Vagina (tissue), 2 donors: ENCODE measurements at regions of chr3 and their contacts with region 1.

Region 1: DNA sequence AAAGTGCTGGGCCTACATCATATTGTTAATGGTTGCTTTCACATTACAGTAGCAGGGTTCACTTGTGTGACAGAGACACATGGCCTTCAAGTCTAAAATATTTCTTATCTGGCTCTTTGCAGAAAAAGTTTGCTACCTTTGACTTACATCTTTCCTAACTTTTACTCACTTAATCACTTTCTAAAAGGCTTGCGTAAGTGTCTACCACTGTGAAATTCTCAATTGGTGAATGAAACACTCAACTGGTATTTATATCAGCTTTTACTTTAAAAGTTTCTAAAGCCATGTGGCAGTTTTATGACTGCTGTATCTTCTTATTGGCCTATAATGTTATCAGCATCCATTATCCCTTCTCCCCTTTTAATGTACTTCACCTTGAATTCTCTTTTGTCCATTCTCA is 554.5 kb downstream of the ZIC1 start:
- DNase-seq: no peak
- H3K4me3 ChIP-seq: no peak overlapping the region
- H3K27ac ChIP-seq: no peak overlapping the region
- H3K4me1 ChIP-seq: no peaks in the 10 kb centered on the region
- H3K27me3 ChIP-seq: no peaks in the 10 kb centered on the region
- CTCF ChIP-seq: no peak
- POLR2A ChIP-seq: no peak

Region 2: GRCh38 chr3:148026009-148026734 is 62.5 kb after region 1 on chr3:
- intact Hi-C with region 1: loop called (anchors 2 kb)
- DNase-seq: no peak
- H3K4me3 ChIP-seq: no peak overlapping the region
- H3K27ac ChIP-seq: no peak overlapping the region
- H3K4me1 ChIP-seq: no peaks in the 10 kb centered on the region
- H3K27me3 ChIP-seq: no peaks in the 10 kb centered on the region
- CTCF ChIP-seq: no peak
- POLR2A ChIP-seq: no peak